AG04449 (cell line): ENCODE measurements at regions of chr1 and their contacts with region 1.

Region 1: DNA sequence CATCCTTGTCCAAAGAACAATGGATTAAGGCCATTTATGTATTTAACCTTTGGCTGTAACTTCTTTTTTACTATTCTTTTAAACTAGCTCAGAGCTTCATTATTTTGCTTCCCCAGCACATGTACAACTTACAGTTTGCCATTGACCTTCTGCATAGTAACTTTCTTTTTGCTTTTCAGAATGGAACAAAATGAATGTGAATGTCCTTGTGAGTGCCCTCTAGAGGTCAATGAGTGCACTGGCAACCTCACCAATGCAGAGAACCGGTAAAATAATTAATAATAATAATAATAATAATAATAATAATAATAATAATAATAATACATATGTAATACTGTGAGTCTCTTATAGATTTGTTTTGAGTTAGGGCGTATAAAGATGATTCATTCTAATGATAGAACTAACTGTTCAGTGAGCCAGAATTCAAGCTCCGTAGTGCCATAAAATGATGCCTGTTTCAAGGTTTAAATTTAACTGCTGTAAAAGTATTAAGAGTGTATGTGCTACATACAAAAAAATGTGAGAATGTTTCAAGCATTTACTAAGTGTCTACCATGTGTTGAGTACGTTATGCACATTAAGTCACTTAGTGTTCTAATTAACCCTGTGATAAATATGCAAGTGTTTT is 69.0 kb upstream of the RAVER2 start:
- DNase-seq: no peak
- H3K4me3 ChIP-seq: no peak overlapping the region
- CTCF ChIP-seq: peak; percentile 45

Region 2: DNA sequence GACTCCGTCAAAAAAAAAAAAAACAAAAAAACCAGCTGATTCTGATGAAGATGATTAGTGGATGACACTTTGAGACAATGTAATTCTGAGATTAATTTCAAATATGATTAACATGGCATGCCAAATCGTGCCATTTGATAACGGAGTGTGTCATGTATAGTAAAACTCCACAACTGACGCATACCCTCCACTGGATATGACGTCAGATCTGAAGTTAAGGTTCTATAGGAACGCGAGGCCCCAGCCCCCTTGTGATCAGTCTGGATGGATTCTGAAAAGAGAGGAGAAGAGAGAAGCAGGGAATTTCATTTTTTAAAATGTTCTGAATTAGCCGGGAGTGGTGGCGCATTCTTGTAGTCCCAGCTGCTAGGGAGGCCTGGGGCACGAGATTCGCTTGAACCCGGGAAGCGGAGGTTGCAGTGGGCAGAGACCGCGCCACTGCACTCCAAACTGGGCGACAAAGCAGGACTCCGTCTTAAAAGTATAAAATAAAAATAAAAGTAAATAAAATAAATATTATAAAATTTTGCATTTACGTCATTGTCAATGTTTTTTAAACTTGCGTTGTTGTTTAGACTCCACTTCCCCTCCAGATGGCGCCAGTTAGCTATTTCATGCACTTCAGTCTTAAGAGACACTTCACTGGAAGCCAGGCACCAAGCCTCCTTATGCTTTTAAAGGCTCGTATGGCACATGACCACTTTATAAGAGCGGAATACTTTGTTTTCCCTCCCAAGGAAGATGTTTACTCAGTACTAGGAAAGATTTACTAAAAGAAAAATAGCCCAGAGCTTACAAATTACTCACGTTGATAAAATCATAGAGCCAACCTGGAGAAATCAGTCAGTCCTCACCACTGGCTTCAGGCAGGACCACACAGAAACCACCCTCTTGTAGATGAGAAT is 406.9 kb before region 1 on chr1:
- CTCF ChIA-PET with region 1: interaction called, 129 read pairs
- POLR2A ChIA-PET with region 1: no interaction called
- DNase-seq: peak; percentile 38
- H3K4me3 ChIP-seq: no peak overlapping the region
- CTCF ChIP-seq: peak; percentile 55

Region 3: GRCh38 chr1:64608005-64608650 is 67.7 kb before region 1 on chr1:
- CTCF ChIA-PET with region 1: no interaction called
- POLR2A ChIA-PET with region 1: no interaction called
- DNase-seq: no peak
- H3K4me3 ChIP-seq: no peak overlapping the region
- CTCF ChIP-seq: no peak

Region 4: GRCh38 chr1:64663668-64664067 is 12.2 kb before region 1 on chr1:
- CTCF ChIA-PET with region 1: interaction called, 45 read pairs
- POLR2A ChIA-PET with region 1: no interaction called
- DNase-seq: no peak
- H3K4me3 ChIP-seq: no peak overlapping the region
- CTCF ChIP-seq: peak; percentile 29

Region 5: GRCh38 chr1:64686828-64687724 is 11.2 kb after region 1 on chr1:
- CTCF ChIA-PET with region 1: interaction called, 69 read pairs
- POLR2A ChIA-PET with region 1: no interaction called
- DNase-seq: peak; percentile 16
- H3K4me3 ChIP-seq: no peak overlapping the region
- CTCF ChIP-seq: peak; percentile 66